ENCODE measurements at regions of chr12 and their contacts with region 1.

Region 1: DNA sequence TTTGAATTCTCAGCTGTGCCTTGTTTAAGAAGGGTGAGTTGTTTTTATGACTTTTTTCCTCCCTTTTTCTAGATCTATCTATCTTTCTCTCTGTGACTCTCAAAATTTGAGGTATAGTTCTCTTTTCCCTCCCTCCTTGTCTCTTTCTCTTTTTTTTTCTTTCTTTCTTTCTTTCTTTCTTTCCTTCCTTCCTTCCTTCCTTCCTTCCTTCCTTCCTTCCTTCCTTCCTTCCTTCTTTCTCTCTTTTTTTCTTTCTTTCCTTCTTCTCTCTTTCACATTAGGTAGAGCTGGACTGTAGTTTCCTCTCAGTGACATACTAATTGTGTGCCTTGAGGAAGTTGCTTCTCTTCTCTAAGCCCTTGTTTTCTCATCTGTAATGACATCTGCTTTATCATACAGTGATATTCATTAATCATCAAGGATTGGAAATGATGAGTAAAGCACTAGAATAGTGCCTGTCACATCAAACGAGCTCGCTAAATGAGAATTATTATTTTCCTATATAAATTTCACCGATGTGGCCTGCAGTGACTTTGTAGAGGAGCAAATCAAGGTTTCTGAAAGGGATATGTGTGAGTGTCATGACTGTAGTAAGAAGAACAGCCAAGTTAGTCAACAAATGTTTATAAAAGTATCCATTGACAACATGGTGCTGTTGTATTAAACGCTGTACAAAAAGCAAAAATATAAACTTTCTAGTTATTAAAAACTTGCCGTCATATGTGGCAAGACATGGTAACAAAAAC is 78.9 kb upstream of the SLC38A2 start:
- DNase-seq: no peak
- ATAC-seq: no peak
- H3K4me3 ChIP-seq: no peak overlapping the region
- H3K27ac ChIP-seq: no peak overlapping the region
- H3K4me1 ChIP-seq: no peaks in the 10 kb centered on the region; the same call in 1 of the 2 replicates
- H3K27me3 ChIP-seq: no peaks in the 10 kb centered on the region
- CTCF ChIP-seq: no peak
- EP300 ChIP-seq: no peak
- POLR2A ChIP-seq: no peak
- RAD21 ChIP-seq: no peak

Region 2: DNA sequence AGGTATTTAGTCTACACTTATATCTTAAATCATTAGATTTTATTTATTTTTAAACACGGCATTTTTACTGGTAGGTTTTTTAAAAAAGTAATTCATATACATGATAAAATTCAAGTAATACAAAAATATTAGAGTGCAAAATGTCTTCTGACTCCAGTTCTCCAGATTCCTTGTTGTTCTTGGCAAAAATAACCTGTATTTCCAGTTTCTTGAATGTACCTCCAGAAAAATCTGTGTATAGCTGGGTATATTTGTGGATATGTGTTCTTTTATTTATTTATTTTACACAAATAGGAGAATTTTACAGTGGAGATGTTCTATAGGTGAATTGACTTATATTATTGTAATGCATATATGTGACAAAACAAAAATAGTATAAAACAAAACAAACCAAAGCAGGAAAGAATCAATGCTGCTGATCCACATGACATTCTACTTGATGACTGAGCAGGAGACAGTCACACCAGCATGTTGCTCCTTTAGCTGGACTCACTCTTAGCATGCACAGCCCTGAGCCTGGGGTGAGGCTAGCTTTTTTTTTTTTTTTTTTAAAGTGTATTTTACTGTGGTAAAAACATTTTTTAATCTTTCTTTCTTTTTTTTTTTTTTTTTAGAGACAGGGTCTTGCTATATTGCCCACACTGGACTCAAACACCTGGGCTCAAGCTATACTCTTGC is 36.7 kb before region 1 on chr12:
- CTCF ChIA-PET with region 1: no interaction called
- POLR2A ChIA-PET with region 1: interaction called, 10 read pairs
- RAD21 ChIA-PET with region 1: no interaction called
- SMC1A ChIA-PET with region 1: no interaction called
- in situ Hi-C with region 1: no loop called
- intact Hi-C with region 1: no loop called
- DNase-seq: no peak
- ATAC-seq: no peak
- H3K4me3 ChIP-seq: no peak overlapping the region
- H3K27ac ChIP-seq: no peak overlapping the region
- H3K4me1 ChIP-seq: no peaks in the 10 kb centered on the region
- H3K27me3 ChIP-seq: no peaks in the 10 kb centered on the region
- CTCF ChIP-seq: no peak
- EP300 ChIP-seq: no peak
- POLR2A ChIP-seq: no peak
- RAD21 ChIP-seq: no peak

Measured in GM12878 (cell line).